AG04450 (cell line): ENCODE measurements at regions of chr11 and their contacts with region 1.

Region 1: GRCh38 chr11:74739546-74740270 is 8.5 kb upstream of the CHRDL2 start:
- DNase-seq: peak; percentile 44
- H3K4me3 ChIP-seq: no peak overlapping the region
- H3K27ac ChIP-seq: no peak overlapping the region
- H3K27me3 ChIP-seq: peaks cover 4% of the 10 kb centered on the region
- CTCF ChIP-seq: peak; percentile 90

Region 2: DNA sequence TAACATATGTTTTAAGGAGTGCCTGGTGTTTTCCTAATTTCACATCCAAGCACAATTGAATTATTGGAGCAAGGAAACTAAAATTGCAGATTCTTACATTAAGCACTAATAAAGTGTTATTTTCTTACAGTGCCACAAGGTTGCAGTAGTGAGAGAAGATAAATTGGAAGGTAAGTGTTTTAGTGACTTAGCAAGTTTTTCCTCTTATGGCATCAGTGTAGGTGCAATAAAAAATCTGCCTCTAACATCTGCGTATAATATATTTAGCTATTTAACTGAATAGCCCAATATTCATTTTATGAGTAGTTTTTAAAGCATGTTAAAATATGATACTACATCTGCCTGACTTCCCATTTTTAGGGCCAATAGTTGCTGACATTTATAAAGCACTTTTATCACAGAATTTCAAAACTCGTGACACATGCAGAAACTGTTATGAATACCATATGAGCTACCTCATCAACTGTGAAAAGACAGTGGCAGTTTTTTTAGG is 128.3 kb before region 1 on chr11:
- CTCF ChIA-PET with region 1: interaction called, 15 read pairs
- POLR2A ChIA-PET with region 1: no interaction called
- DNase-seq: peak; percentile 54
- H3K4me3 ChIP-seq: no peak overlapping the region
- H3K27ac ChIP-seq: no peak overlapping the region
- H3K27me3 ChIP-seq: no peaks in the 10 kb centered on the region
- CTCF ChIP-seq: peak; percentile 58

Region 3: GRCh38 chr11:74634537-74634936 is 105.2 kb before region 1 on chr11:
- CTCF ChIA-PET with region 1: interaction called, 10 read pairs
- POLR2A ChIA-PET with region 1: no interaction called
- DNase-seq: no peak
- H3K4me3 ChIP-seq: no peak overlapping the region
- H3K27ac ChIP-seq: no peak overlapping the region
- H3K27me3 ChIP-seq: no peaks in the 10 kb centered on the region
- CTCF ChIP-seq: peak; percentile 44

Region 4: GRCh38 chr11:74720596-74721478 is 18.9 kb before region 1 on chr11:
- CTCF ChIA-PET with region 1: interaction called, 21 read pairs
- POLR2A ChIA-PET with region 1: interaction called, 3 read pairs
- DNase-seq: peak; percentile 81
- H3K4me3 ChIP-seq: no peak overlapping the region; the same call in 1 of the 2 replicates
- H3K27ac ChIP-seq: peak overlapping the region; percentile 91
- H3K27me3 ChIP-seq: no peaks in the 10 kb centered on the region
- CTCF ChIP-seq: no peak

Region 5: GRCh38 chr11:74726547-74727182 is 13.0 kb before region 1 on chr11:
- CTCF ChIA-PET with region 1: interaction called, 21 read pairs
- POLR2A ChIA-PET with region 1: interaction called, 3 read pairs
- DNase-seq: peak; percentile 75
- H3K4me3 ChIP-seq: no peak overlapping the region
- H3K27ac ChIP-seq: no peak overlapping the region
- H3K27me3 ChIP-seq: peaks cover 27% of the 10 kb centered on the region
- CTCF ChIP-seq: peak; percentile 99

Region 6: GRCh38 chr11:74791333-74792100 is 51.8 kb after region 1 on chr11:
- CTCF ChIA-PET with region 1: no interaction called
- POLR2A ChIA-PET with region 1: no interaction called
- DNase-seq: no peak
- H3K4me3 ChIP-seq: no peak overlapping the region
- H3K27ac ChIP-seq: no peak overlapping the region
- H3K27me3 ChIP-seq: no peaks in the 10 kb centered on the region
- CTCF ChIP-seq: no peak